Motor neuron (in vitro differentiated cells): ENCODE measurements at regions of chr12 and their contacts with region 1.

Region 1: DNA sequence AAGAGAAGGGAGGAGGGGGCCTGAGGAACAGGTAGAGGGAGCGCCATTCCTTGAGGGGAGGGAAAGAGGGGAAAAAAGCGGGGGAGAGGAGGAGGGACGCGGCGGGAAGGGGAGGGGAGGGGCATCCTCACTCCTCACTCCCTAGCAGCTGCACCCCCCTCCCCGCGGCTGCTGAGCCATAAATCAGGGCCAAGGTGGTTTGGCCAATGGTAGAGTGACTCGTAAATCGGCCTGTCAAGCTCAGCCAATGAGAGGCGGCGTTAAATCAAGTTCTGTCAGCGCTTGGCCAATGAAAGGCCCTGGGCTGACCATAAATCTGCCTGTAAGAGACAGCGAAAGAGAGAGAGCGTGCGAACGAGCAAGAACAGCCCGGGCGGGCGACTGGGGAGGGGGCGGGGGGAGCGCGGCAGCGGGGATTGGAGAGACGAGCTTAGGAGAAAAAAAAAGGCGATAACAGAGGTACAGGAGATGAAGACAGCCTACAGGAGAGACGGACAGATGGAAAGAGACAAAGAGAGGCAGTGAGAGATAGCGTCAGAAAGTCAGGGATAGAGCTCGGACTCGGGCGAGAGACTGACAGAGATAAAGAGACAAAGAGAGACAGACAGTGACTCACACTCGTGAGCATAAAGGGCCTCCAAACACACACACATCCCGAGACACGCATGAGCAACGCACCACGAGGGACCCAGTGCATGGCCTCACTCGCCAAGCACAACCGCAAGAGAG is 5.1 kb downstream of the GPR84 start:
- ATAC-seq: peak; percentile 84 to 94 (median 86)
- H3K4me3 ChIP-seq: peak overlapping the region; percentile 22 to 40 (median 32)
- H3K27ac ChIP-seq: peak overlapping the region; percentile 93 to 94
- H3K4me1 ChIP-seq: peaks cover 62 to 64% of the 10 kb centered on the region in 2 donors

Region 2: GRCh38 chr12:54005853-54006686 is 353.1 kb before region 1 on chr12:
- in situ Hi-C with region 1: loop called in 2 of 9 experiments (anchors 25 kb)
- ATAC-seq: peak; percentile 57 to 87 (median 74)
- H3K4me3 ChIP-seq: peak overlapping the region in 2 of 5 donors; percentile 5 to 19
- H3K27ac ChIP-seq: no peak overlapping the region
- H3K4me1 ChIP-seq: peaks cover 10 to 13% of the 10 kb centered on the region in 2 donors

Region 3: GRCh38 chr12:54032627-54033100 is 326.5 kb before region 1 on chr12 and contains the start of gene HOXC5:
- in situ Hi-C with region 1: loop called in 1 of 9 experiments (anchors 25 kb)
- ATAC-seq: peak in 7 of 8 experiments; percentile 2 to 47 (median 34)
- H3K4me3 ChIP-seq: peak within 1 kb of the TSS; percentile 41 to 62 (median 49)
- H3K27ac ChIP-seq: peak within 1 kb of the TSS; percentile 94
- H3K4me1 ChIP-seq: peaks cover 49 to 72% of the 10 kb centered on the region in 2 donors
- total RNA-seq, gene HOXC5: 4.4 to 49.2 (median 10.4) TPM

Region 4: DNA sequence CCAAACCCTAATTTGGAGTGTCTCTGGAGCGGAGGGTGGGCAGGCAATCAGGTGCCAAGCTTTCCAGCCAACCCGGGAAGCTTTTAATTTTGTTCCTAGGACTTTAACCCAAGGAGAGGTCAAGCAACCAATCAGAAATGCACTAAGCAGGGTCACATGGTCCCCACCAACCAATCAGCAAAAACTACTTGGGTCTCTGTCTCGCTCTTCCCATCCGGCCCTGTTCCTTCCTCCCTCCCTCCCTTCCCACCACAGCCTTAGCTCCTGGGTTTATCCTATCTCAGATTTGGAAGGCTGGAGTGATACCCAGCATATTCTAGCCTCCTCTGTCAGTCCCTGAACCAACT is 319.1 kb before region 1 on chr12:
- in situ Hi-C with region 1: loop called in 2 of 9 experiments (anchors 10 to 25 kb)
- ATAC-seq: peak; percentile 14 to 65 (median 39)
- H3K4me3 ChIP-seq: peak overlapping the region in 4 of 5 donors; percentile 31 to 49 (median 34)
- H3K27ac ChIP-seq: no peak overlapping the region
- H3K4me1 ChIP-seq: peaks cover 72 to 94% of the 10 kb centered on the region in 2 donors

Region 5: GRCh38 chr12:54214553-54215406 is 144.4 kb before region 1 on chr12:
- in situ Hi-C with region 1: loop called in 1 of 9 experiments (anchors 25 kb)
- ATAC-seq: peak; percentile 65 to 90 (median 77)
- H3K4me3 ChIP-seq: no peak overlapping the region
- H3K27ac ChIP-seq: no peak overlapping the region
- H3K4me1 ChIP-seq: peaks cover 15 to 18% of the 10 kb centered on the region in 2 donors

Region 6: GRCh38 chr12:54259194-54260011 is 99.8 kb before region 1 on chr12:
- in situ Hi-C with region 1: loop called in 1 of 9 experiments (anchors 25 kb)
- ATAC-seq: peak; percentile 95 to 99 (median 98)
- H3K4me3 ChIP-seq: peak overlapping the region; percentile 26 to 39 (median 34)
- H3K27ac ChIP-seq: peak overlapping the region; percentile 79 to 87
- H3K4me1 ChIP-seq: peaks cover 43 to 57% of the 10 kb centered on the region in 2 donors